ENCODE measurements at regions of chr15 and their contacts with region 1.

Region 1: DNA sequence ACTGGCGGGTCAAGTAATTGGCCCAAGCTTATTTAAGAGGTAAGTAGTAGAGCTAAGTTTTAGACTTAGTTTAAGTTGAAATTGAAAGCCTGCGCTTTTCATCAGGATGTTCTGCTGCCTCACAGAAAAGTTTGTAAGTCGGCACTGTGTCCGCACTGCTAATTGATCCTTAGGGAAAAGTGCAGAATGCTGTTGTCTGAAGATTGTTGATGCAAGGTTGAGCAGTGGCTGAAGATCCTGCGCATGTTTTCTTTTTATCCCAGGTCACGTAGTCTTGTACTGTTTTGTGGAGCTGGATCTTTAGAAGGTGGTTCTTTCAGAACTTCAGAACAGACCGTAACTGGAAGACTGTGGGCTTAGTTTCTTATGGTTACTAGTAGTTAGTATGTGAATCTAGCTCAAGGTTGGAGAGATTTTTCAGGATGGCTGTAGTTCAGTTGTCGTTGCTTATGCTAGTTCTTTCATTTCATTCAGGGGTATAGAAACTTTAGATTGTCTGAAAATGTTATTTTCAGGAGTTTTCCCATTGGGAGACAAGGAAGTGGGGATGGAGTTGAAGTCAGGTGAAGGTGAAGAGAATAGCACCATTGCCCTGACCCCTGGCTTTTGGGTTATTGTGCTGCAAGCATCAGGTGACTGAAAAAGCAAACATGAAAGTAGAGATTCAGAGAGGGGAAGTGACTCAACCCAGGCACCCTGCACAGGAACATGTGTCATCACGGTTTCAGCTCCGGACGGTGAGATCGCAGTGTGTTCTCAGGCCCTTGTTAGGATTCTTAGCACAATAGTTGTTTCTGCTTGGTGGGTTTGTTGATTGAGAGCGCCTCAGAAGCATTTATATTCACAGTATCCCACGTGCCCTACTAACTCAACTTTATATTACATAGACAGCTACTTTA is 32.8 kb downstream of the AKAP13 start:
- DNase-seq: peak; percentile 86
- ATAC-seq: peak; percentile 93
- H3K4me3 ChIP-seq: peak overlapping the region in 1 of 5 experiments; percentile 9
- H3K4me3 Mint-ChIP-seq: peak overlapping the region; percentile 56
- H3K27ac ChIP-seq: peak overlapping the region; percentile 13 to 72
- H3K27ac Mint-ChIP-seq: peak overlapping the region; percentile 90
- H3K4me1 ChIP-seq: peaks cover 56 to 61% of the 10 kb centered on the region in 2 donors
- H3K4me1 Mint-ChIP-seq: peaks cover 67% of the 10 kb centered on the region
- H3K27me3 ChIP-seq: no peaks in the 10 kb centered on the region
- H3K27me3 Mint-ChIP-seq: no peaks in the 10 kb centered on the region
- CTCF ChIP-seq: peak; percentile 18

Region 2: DNA sequence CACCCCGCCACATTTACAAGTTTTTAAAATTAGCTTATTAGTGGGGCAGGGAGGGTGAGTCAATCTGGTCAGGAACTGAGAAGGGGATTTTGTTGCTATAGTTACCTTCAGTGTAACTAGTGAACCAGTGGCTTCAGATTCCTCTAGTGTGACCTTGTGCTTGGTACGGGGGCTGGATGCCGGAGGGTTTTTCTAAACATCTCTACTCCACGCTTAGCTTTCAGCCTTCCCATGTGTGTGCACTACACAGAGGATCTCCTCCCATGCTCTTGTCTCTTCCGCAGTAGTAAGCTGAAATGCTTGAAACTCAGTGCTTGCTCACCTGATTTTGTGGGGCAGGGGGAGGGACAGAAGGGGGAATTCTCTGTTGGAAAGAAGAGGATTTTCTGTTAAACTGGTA is 100.7 kb before region 1 on chr15:
- CTCF ChIA-PET with region 1: interaction called, 40 read pairs
- POLR2A ChIA-PET with region 1: interaction called, 6 read pairs
- intact Hi-C with region 1: loop called (anchors 1 kb)
- DNase-seq: peak; percentile 86
- ATAC-seq: peak; percentile 84
- H3K4me3 ChIP-seq: peak overlapping the region in 4 of 5 experiments; percentile 28 to 59 (median 51)
- H3K4me3 Mint-ChIP-seq: peak overlapping the region; percentile 89
- H3K27ac ChIP-seq: peak overlapping the region; percentile 87 to 97
- H3K27ac Mint-ChIP-seq: peak overlapping the region; percentile 95
- H3K4me1 ChIP-seq: peaks cover 56 to 63% of the 10 kb centered on the region in 2 donors
- H3K4me1 Mint-ChIP-seq: peaks cover 87% of the 10 kb centered on the region
- H3K27me3 ChIP-seq: no peaks in the 10 kb centered on the region
- H3K27me3 Mint-ChIP-seq: no peaks in the 10 kb centered on the region
- CTCF ChIP-seq: no peak

Region 3: GRCh38 chr15:85380217-85380811 is 32.9 kb before region 1 on chr15 and contains the start of gene AKAP13:
- CTCF ChIA-PET with region 1: interaction called, 89 read pairs
- POLR2A ChIA-PET with region 1: interaction called, 10 read pairs
- intact Hi-C with region 1: loop called (anchors 1 kb)
- DNase-seq: peak; percentile 97
- ATAC-seq: peak; percentile 78
- H3K4me3 ChIP-seq: peak within 1 kb of the TSS; percentile 65 to 90 (median 69)
- H3K4me3 Mint-ChIP-seq: peak within 1 kb of the TSS; percentile 86
- H3K27ac ChIP-seq: peak within 1 kb of the TSS; percentile 79 to 85
- H3K27ac Mint-ChIP-seq: peak within 1 kb of the TSS; percentile 90
- H3K4me1 ChIP-seq: peaks cover 35 to 42% of the 10 kb centered on the region in 2 donors
- H3K4me1 Mint-ChIP-seq: peaks cover 44% of the 10 kb centered on the region
- H3K27me3 ChIP-seq: peaks cover 0 to 4% (median 0%) of the 10 kb centered on the region in 4 experiments
- H3K27me3 Mint-ChIP-seq: peaks cover 4% of the 10 kb centered on the region
- CTCF ChIP-seq: no peak
- total RNA-seq, gene AKAP13: 358 and 380 TPM in 2 replicates

Region 4: GRCh38 chr15:85394552-85395333 is 18.5 kb before region 1 on chr15:
- CTCF ChIA-PET with region 1: interaction called, 30 read pairs
- POLR2A ChIA-PET with region 1: interaction called, 3 read pairs
- intact Hi-C with region 1: no loop called
- DNase-seq: no peak
- ATAC-seq: no peak
- H3K4me3 ChIP-seq: no peak overlapping the region
- H3K4me3 Mint-ChIP-seq: no peak overlapping the region
- H3K27ac ChIP-seq: no peak overlapping the region
- H3K27ac Mint-ChIP-seq: no peak overlapping the region
- H3K4me1 ChIP-seq: peaks cover 29 to 48% of the 10 kb centered on the region in 2 donors
- H3K4me1 Mint-ChIP-seq: peaks cover 60% of the 10 kb centered on the region
- H3K27me3 ChIP-seq: no peaks in the 10 kb centered on the region
- H3K27me3 Mint-ChIP-seq: no peaks in the 10 kb centered on the region
- CTCF ChIP-seq: no peak

Region 5: DNA sequence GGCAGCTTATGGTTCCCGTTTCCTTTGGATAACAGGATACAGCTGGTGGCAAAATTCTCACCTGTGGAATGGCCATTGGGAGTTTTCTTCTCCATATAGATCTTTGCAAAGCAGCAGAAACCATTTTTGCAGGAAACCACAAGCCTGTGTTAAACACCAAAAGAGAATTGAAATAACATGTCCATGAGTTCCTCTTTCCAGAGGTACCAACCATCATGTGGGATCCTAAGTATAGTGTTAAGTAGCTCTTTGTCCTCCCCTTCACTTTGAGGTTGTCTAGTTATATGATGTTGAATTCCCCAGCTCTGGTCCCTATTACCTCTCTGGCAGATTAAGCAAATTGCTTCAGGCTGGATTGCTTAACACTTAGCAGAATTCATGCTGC is 62.1 kb after region 1 on chr15:
- CTCF ChIA-PET with region 1: interaction called, 4 read pairs
- POLR2A ChIA-PET with region 1: no interaction called
- intact Hi-C with region 1: loop called (anchors 5 kb)
- DNase-seq: peak; percentile 71
- ATAC-seq: peak; percentile 50
- H3K4me3 ChIP-seq: peak overlapping the region in 2 of 5 experiments; percentile 46 to 64
- H3K4me3 Mint-ChIP-seq: peak overlapping the region; percentile 48
- H3K27ac ChIP-seq: peak overlapping the region; percentile 51 to 78
- H3K27ac Mint-ChIP-seq: peak overlapping the region; percentile 47
- H3K4me1 ChIP-seq: peaks cover 72 to 78% of the 10 kb centered on the region in 2 donors
- H3K4me1 Mint-ChIP-seq: peaks cover 83% of the 10 kb centered on the region
- H3K27me3 ChIP-seq: no peaks in the 10 kb centered on the region
- H3K27me3 Mint-ChIP-seq: no peaks in the 10 kb centered on the region
- CTCF ChIP-seq: no peak

Measured in B cell (primary cell).